ENCODE measurements at regions of chr9 and their contacts with region 1.

Region 1: DNA sequence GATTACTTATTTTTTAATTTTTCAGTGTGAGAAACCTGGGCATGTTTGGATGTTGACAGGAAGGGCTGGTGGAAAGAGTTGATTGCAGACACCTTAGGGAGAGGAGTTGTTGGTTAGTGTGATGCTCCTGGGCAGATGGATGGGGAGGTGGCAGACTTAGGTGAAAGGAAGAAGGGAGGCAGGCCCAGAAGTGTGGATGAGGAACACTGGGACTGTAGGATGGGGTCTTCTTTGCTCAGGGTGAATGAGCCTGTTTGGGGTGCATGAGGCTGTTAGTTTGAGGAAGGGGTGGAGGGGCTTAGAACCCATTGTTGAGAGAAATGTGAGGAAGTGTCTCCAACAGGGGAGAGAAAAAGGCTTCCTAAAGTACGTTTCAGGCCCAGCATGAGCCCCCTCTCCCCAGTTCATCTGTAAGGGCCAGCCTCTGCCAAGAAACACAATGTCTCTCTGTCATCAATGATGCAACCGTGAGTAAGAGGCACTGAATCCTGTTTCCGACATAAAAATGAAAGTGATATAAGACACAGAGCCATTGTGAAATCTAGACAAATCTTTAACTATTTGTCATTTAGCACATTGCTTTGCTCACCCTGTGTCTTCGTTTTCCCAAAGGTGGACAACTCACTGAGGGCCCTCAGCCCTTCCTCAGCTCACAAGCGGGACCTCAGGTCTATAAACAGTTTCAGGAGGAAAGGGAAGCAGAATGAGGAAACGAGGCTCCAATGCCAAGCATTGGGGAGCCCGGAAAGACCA is 58.7 kb upstream of the KLF4 start:
- DNase-seq: peak; percentile 90 to 95 (median 95)
- H3K4me3 ChIP-seq: peak overlapping the region; percentile 32 to 74 (median 72)
- H3K4me3 Mint-ChIP-seq: peak overlapping the region; percentile 75 to 87
- H3K27ac ChIP-seq: peak overlapping the region; percentile 85 to 96
- H3K27ac Mint-ChIP-seq: peak overlapping the region; percentile 96 to 99 (median 96)
- H3K4me1 ChIP-seq: peaks cover 24 to 28% of the 10 kb centered on the region in 2 donors
- H3K4me1 Mint-ChIP-seq: peaks cover 25% of the 10 kb centered on the region
- H3K27me3 ChIP-seq: no peaks in the 10 kb centered on the region
- H3K27me3 Mint-ChIP-seq: peaks cover 0 to 4% (median 0%) of the 10 kb centered on the region in 3 donors
- CTCF ChIP-seq: no peak

Region 2: DNA sequence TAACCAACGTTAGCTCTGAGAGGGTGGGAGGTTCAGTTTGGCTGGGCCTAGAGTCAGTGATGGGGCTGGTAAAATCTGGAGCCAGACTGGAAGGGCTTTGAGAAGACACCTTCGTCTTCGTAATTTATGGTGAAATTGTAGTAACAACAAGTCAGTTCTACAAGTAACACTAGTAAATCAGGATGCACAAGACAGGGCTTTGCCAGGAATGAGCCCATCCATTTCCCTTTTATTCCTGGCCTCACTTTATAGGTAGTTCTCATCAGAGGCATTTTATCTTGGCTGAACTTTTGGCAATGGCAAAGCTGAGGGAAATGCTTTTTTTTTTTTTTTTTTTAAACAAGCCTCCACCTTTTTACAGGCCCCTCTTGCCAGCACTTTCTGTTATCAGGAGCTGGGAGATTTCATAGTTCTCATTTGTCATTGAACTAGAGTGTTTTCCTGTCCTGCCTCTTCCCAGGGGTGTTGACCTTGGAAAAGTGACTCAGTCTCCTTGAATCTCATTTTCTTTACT is 51.9 kb after region 1 on chr9:
- intact Hi-C with region 1: no loop called
- DNase-seq: no peak
- H3K4me3 ChIP-seq: no peak overlapping the region
- H3K4me3 Mint-ChIP-seq: no peak overlapping the region
- H3K27ac ChIP-seq: no peak overlapping the region
- H3K27ac Mint-ChIP-seq: peak overlapping the region in 1 of 7 donors; percentile 50
- H3K4me1 ChIP-seq: peaks cover 18 to 20% of the 10 kb centered on the region in 2 donors
- H3K4me1 Mint-ChIP-seq: peaks cover 24% of the 10 kb centered on the region
- H3K27me3 ChIP-seq: no peaks in the 10 kb centered on the region
- H3K27me3 Mint-ChIP-seq: no peaks in the 10 kb centered on the region
- CTCF ChIP-seq: no peak

Region 3: DNA sequence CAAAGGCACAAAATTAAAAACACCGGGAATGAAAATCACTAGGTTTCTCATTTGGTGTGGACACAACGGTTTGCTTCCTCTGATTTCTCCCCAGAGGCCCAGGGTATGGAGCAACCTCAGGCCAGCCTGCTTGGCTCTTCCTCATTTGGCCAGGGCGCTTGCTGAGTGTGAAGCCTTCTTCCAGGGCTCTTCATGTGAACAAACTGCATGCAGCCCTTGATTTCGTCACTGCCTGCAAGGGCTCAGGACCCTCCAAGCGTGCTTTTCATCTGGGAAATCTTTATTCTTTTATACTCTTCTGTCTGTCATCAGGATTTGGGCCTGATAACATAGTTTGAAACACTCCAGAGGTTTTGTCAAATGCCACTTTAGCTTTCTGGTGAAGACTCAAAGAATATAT is 63.9 kb after region 1 on chr9:
- intact Hi-C with region 1: loop called in 1 of 2 experiments (anchors 10 kb)
- DNase-seq: peak; percentile 86 to 92 (median 91)
- H3K4me3 ChIP-seq: no peak overlapping the region
- H3K4me3 Mint-ChIP-seq: peak overlapping the region; percentile 4 to 35
- H3K27ac ChIP-seq: peak overlapping the region; percentile 70 to 94
- H3K27ac Mint-ChIP-seq: peak overlapping the region; percentile 89 to 97 (median 94)
- H3K4me1 ChIP-seq: peaks cover 64 to 67% of the 10 kb centered on the region in 2 donors
- H3K4me1 Mint-ChIP-seq: peaks cover 77% of the 10 kb centered on the region
- H3K27me3 ChIP-seq: no peaks in the 10 kb centered on the region
- H3K27me3 Mint-ChIP-seq: peaks cover 0 to 3% (median 2%) of the 10 kb centered on the region in 3 donors
- CTCF ChIP-seq: no peak

Region 4: GRCh38 chr9:107637421-107638420 is 89.5 kb after region 1 on chr9:
- intact Hi-C with region 1: loop called in 1 of 2 experiments (anchors 10 kb)
- DNase-seq: peak; percentile 92 to 97 (median 93)
- H3K4me3 ChIP-seq: peak overlapping the region; percentile 47 to 74 (median 70)
- H3K4me3 Mint-ChIP-seq: peak overlapping the region; percentile 81 to 92
- H3K27ac ChIP-seq: peak overlapping the region; percentile 98 to 99
- H3K27ac Mint-ChIP-seq: peak overlapping the region; percentile 97 to 98 (median 98)
- H3K4me1 ChIP-seq: peaks cover 35 to 41% of the 10 kb centered on the region in 2 donors
- H3K4me1 Mint-ChIP-seq: peaks cover 45% of the 10 kb centered on the region
- H3K27me3 ChIP-seq: no peaks in the 10 kb centered on the region
- H3K27me3 Mint-ChIP-seq: peaks cover 0 to 3% (median 0%) of the 10 kb centered on the region in 3 donors
- CTCF ChIP-seq: no peak

Region 5: GRCh38 chr9:107954312-107954711 is 406.1 kb after region 1 on chr9:
- intact Hi-C with region 1: no loop called
- DNase-seq: peak; percentile 44 to 87 (median 80)
- H3K4me3 ChIP-seq: no peak overlapping the region
- H3K4me3 Mint-ChIP-seq: no peak overlapping the region
- H3K27ac ChIP-seq: peak overlapping the region in 1 of 2 donors; percentile 66
- H3K27ac Mint-ChIP-seq: peak overlapping the region; percentile 58 to 84 (median 77)
- H3K4me1 ChIP-seq: peaks cover 29 to 31% of the 10 kb centered on the region in 2 donors
- H3K4me1 Mint-ChIP-seq: peaks cover 37% of the 10 kb centered on the region
- H3K27me3 ChIP-seq: no peaks in the 10 kb centered on the region
- H3K27me3 Mint-ChIP-seq: peaks cover 0 to 3% (median 2%) of the 10 kb centered on the region in 3 donors
- CTCF ChIP-seq: no peak